CD4-positive, alpha-beta memory T cell (primary cell): ENCODE measurements at regions of chr1 and their contacts with region 1.

Region 1: GRCh38 chr1:58783993-58784757 is at the start of gene JUN:
- DNase-seq: peak; percentile 98 to 100 (median 99)
- H3K4me3 ChIP-seq: peak within 1 kb of the TSS; percentile 76 to 96
- H3K4me3 Mint-ChIP-seq: peak within 1 kb of the TSS; percentile 87 to 98 (median 92)
- H3K27ac ChIP-seq: peak within 1 kb of the TSS; percentile 99
- H3K27ac Mint-ChIP-seq: peak within 1 kb of the TSS; percentile 97 to 100 (median 99)
- H3K4me1 ChIP-seq: peaks cover 31% of the 10 kb centered on the region
- H3K4me1 Mint-ChIP-seq: peaks cover 19 to 49% (median 29%) of the 10 kb centered on the region in 4 donors
- H3K27me3 ChIP-seq: no peaks in the 10 kb centered on the region
- H3K27me3 Mint-ChIP-seq: peaks cover 3 to 5% of the 10 kb centered on the region in 2 donors
- total RNA-seq, gene JUN: 19.0 TPM

Region 2: GRCh38 chr1:58546520-58547308 is 237.5 kb before region 1 on chr1 and contains the start of gene OMA1:
- CTCF ChIA-PET with region 1: no interaction called
- POLR2A ChIA-PET with region 1: interaction called, 9 read pairs
- intact Hi-C with region 1: loop called (anchors 1 kb)
- DNase-seq: peak; percentile 96 to 98 (median 97)
- H3K4me3 ChIP-seq: peak within 1 kb of the TSS; percentile 78 to 88
- H3K4me3 Mint-ChIP-seq: peak within 1 kb of the TSS; percentile 93 to 99 (median 96)
- H3K27ac ChIP-seq: peak within 1 kb of the TSS; percentile 94
- H3K27ac Mint-ChIP-seq: peak within 1 kb of the TSS; percentile 95 to 99 (median 99)
- H3K4me1 ChIP-seq: peaks cover 17% of the 10 kb centered on the region
- H3K4me1 Mint-ChIP-seq: peaks cover 19 to 35% (median 23%) of the 10 kb centered on the region in 4 donors
- H3K27me3 ChIP-seq: no peaks in the 10 kb centered on the region
- H3K27me3 Mint-ChIP-seq: peaks cover 0 to 2% of the 10 kb centered on the region in 2 donors
- total RNA-seq, gene OMA1: 73.1 to 86.2 TPM

Region 3: GRCh38 chr1:58768971-58769808 is 15.0 kb before region 1 on chr1:
- CTCF ChIA-PET with region 1: interaction called, 11 read pairs
- POLR2A ChIA-PET with region 1: interaction called, 21 read pairs
- intact Hi-C with region 1: no loop called
- DNase-seq: no peak
- H3K4me3 ChIP-seq: no peak overlapping the region
- H3K4me3 Mint-ChIP-seq: no peak overlapping the region
- H3K27ac ChIP-seq: no peak overlapping the region
- H3K27ac Mint-ChIP-seq: no peak overlapping the region
- H3K4me1 ChIP-seq: peaks cover 6% of the 10 kb centered on the region
- H3K4me1 Mint-ChIP-seq: peaks cover 0 to 11% (median 8%) of the 10 kb centered on the region in 4 donors
- H3K27me3 ChIP-seq: no peaks in the 10 kb centered on the region
- H3K27me3 Mint-ChIP-seq: peaks cover 1 to 2% of the 10 kb centered on the region in 2 donors

Region 4: GRCh38 chr1:58857680-58858673 is 73.8 kb after region 1 on chr1:
- CTCF ChIA-PET with region 1: interaction called, 4 read pairs
- POLR2A ChIA-PET with region 1: interaction called, 23 read pairs
- intact Hi-C with region 1: no loop called
- DNase-seq: peak; percentile 9 to 36 (median 28)
- H3K4me3 ChIP-seq: no peak overlapping the region
- H3K4me3 Mint-ChIP-seq: peak overlapping the region in 5 of 8 donors; percentile 24 to 69 (median 52)
- H3K27ac ChIP-seq: no peak overlapping the region
- H3K27ac Mint-ChIP-seq: peak overlapping the region; percentile 25 to 93 (median 66)
- H3K4me1 ChIP-seq: peaks cover 28% of the 10 kb centered on the region
- H3K4me1 Mint-ChIP-seq: peaks cover 15 to 34% (median 19%) of the 10 kb centered on the region in 4 donors
- H3K27me3 ChIP-seq: no peaks in the 10 kb centered on the region
- H3K27me3 Mint-ChIP-seq: no peaks in the 10 kb centered on the region

Region 5: DNA sequence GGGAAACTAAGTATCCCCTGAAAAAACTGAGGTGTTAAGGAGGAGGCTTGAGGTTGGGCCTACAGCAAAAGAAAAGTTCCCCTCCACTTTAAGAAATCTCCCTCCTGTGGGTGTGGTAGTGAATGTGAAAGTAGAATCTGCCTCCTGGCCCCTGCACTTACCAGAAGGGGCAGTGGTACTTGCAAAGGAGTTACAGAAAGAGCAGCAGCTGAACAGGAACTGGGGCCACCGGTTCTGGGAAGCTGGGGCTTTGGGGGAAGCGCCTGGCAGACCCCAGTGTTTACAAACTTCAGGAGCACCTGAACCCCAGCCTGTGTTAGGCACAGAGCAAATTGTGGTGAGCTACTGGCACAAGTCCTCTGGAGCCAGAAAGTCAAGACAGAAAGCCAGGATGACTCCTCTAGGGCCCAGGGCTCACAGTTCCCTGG is 262.6 kb after region 1 on chr1:
- CTCF ChIA-PET with region 1: no interaction called
- POLR2A ChIA-PET with region 1: interaction called, 33 read pairs
- intact Hi-C with region 1: no loop called
- DNase-seq: peak in 4 of 5 donors; percentile 36 to 50 (median 40)
- H3K4me3 ChIP-seq: no peak overlapping the region
- H3K4me3 Mint-ChIP-seq: peak overlapping the region in 7 of 8 donors; percentile 19 to 69 (median 51)
- H3K27ac ChIP-seq: no peak overlapping the region
- H3K27ac Mint-ChIP-seq: peak overlapping the region; percentile 13 to 89 (median 84)
- H3K4me1 ChIP-seq: peaks cover 38% of the 10 kb centered on the region
- H3K4me1 Mint-ChIP-seq: peaks cover 31 to 55% (median 40%) of the 10 kb centered on the region in 4 donors
- H3K27me3 ChIP-seq: no peaks in the 10 kb centered on the region
- H3K27me3 Mint-ChIP-seq: no peaks in the 10 kb centered on the region

Region 6: DNA sequence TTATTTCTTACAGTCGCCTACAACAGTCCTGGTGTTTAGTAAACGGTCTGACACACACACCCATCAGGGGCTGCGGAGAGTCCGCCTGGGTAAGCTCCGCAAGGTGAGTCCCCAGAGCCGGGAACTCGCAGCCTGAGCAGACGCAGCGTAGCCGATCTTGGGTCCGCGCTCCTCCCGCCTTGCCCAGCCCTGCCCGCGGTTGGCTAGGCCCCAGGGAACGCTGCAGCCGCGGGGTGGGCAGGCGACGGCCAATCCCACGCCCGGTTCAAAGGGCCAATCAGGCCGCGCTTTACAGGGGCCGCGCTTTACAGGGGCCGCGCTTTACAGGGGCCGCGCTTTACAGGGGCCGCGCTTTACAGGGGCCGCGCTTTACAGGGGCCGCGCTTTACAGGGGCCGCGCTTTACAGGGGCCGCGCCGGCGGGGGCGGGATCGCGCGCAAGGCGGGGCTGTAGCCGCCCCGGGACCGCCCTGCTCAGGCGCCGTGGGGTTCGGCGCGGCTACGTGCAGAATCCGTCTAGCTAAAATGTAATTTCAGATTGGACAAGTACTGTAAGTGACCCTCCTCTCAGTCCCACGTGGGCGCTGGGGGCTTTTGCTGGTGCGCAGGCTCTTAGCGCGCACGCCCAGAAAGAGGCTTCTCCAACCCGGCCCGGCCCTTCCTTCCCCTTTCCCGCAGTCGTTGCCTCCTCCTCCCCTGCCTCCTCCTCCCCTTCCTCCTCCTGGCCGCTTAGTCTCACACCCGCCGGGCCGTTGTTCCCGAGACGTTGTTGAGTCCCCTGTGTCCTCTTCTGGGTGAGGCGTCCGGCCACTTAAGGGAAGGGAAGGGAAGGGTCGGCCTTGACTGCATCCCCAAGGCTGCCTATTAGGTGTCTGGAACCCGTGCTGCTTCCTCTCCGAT is 512.4 kb after region 1 on chr1 and contains the start of gene FGGY:
- CTCF ChIA-PET with region 1: no interaction called
- POLR2A ChIA-PET with region 1: interaction called, 32 read pairs
- intact Hi-C with region 1: loop called (anchors 1 kb)
- DNase-seq: peak; percentile 81 to 90 (median 82)
- H3K4me3 ChIP-seq: peak within 1 kb of the TSS; percentile 62 to 73
- H3K4me3 Mint-ChIP-seq: peak within 1 kb of the TSS; percentile 82 to 94 (median 91)
- H3K27ac ChIP-seq: peak within 1 kb of the TSS; percentile 69
- H3K27ac Mint-ChIP-seq: peak within 1 kb of the TSS; percentile 85 to 96 (median 95)
- H3K4me1 ChIP-seq: peaks cover 18% of the 10 kb centered on the region
- H3K4me1 Mint-ChIP-seq: peaks cover 4 to 25% (median 18%) of the 10 kb centered on the region in 4 donors
- H3K27me3 ChIP-seq: no peaks in the 10 kb centered on the region
- H3K27me3 Mint-ChIP-seq: no peaks in the 10 kb centered on the region
- total RNA-seq, gene FGGY: 5.3 to 8.8 TPM